Sigmoid colon (tissue), 7 donors: ENCODE measurements at regions of chr6 and their contacts with region 1.

Region 1: GRCh38 chr6:169751242-169752073 is at the starts of genes DYNLT2 and ERMARD:
- DNase-seq: peak; percentile 96
- H3K4me3 ChIP-seq: peak within 1 kb of the TSS; percentile 67 to 89 (median 82)
- H3K27ac ChIP-seq: peak within 1 kb of the TSS; percentile 96 to 97 (median 97)
- H3K4me1 ChIP-seq: peaks cover 0 to 26% (median 19%) of the 10 kb centered on the region in 4 donors
- H3K27me3 ChIP-seq: no peaks in the 10 kb centered on the region
- CTCF ChIP-seq: peak in 3 of 4 experiments; percentile 18 to 31 (median 20)
- EP300 ChIP-seq: peak in 2 of 4 donors; percentile 10 to 31
- POLR2A ChIP-seq: peak; percentile 83 to 88
- total RNA-seq, gene DYNLT2: 1.4 to 2.2 (median 2.1) TPM
- total RNA-seq, gene ERMARD: 14.8 to 32.4 (median 19.1) TPM

Region 2: DNA sequence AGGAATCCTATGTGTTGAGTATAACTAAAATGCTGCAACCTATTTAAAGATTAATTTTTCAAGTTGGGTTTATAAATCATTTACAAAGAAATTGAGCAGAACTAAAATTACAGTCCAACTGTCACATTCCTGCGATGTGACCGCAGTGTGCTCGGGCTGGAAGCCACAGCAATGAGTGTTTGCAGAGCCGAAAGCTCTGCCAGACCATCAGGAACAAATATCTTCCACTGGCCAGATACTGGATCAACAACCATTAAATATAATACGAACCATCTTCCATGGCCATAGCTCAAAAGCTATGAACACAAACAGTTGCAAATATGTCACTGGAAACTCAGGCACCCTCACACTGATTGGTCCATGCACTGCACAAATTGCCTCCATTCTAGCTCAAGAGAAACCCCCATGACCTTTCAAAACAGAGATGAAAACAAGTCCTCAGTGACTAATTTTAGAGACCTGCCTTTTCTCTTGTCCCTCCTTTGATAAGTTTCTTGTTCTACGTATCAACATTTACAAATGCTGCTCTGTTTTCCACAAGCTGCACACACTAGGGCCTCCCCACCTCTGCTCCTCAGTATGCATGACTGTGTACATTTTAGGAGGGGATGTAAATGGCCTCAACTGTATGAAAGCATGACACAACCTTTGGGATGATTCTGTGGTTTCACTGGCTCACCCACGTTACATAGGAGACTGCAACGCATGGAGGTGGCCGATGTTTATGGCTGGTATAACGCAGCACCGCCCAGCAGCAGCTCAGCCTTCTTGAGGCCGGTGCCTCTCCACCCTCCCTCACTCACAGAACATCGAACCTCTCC is 221.3 kb before region 1 on chr6:
- intact Hi-C with region 1: no loop called
- DNase-seq: peak; percentile 89
- H3K4me3 ChIP-seq: no peak overlapping the region
- H3K27ac ChIP-seq: peak overlapping the region; percentile 58 to 82 (median 78)
- H3K4me1 ChIP-seq: peaks cover 0 to 39% (median 28%) of the 10 kb centered on the region in 4 donors
- H3K27me3 ChIP-seq: no peaks in the 10 kb centered on the region
- CTCF ChIP-seq: no peak
- EP300 ChIP-seq: peak in 3 of 4 donors; percentile 78 to 92 (median 91)
- POLR2A ChIP-seq: no peak

Region 3: DNA sequence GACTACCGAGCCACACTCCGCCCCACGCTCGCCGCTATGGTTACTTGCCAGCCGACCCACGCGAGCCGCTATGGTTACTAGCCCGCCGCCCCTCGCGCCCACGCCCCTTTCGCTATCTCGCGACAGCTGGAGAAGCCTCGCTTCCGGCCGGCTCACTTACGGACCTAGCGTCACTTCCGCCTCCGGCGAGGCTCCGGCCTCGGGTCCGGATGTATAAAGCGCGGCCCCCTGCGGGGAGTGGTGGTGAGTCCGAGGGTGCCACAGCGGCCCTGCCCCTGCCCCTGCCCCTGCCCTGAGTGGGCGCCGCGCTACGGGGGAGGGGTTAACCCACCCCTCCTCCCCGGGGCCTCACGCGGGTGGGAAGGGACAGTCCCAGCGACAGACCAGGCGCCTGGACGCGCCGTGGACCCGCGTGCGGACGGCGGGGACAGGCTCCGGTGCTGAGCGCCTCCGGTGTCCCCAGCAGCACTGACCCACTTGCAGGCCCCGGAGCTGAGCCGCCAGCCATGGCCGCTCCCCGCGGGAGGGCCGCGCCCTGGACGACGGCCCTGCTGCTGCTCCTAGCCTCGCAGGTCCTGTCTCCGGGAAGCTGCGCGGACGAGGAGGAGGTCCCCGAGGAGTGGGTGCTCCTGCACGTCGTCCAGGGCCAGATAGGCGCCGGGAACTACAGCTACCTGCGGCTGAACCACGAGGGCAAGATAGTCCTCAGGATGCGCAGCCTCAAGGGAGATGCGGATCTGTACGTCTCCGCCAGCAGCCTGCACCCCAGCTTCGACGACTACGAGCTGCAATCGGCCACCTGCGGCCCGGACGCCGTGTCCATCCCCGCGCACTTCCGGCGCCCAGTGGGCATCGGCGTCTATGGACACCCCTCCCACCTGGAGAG is 49.3 kb before region 1 on chr6 and contains the starts of genes C6orf120 and WDR27:
- intact Hi-C with region 1: loop called (anchors 2 kb)
- DNase-seq: peak; percentile 98
- H3K4me3 ChIP-seq: peak within 1 kb of the TSS; percentile 83 to 96 (median 94)
- H3K27ac ChIP-seq: peak within 1 kb of the TSS; percentile 92 to 98 (median 98)
- H3K4me1 ChIP-seq: peaks cover 0 to 54% (median 47%) of the 10 kb centered on the region in 4 donors
- H3K27me3 ChIP-seq: no peaks in the 10 kb centered on the region
- CTCF ChIP-seq: no peak
- EP300 ChIP-seq: no peak
- POLR2A ChIP-seq: peak; percentile 94
- total RNA-seq, gene C6orf120: 22.7 to 33.6 (median 30.3) TPM
- total RNA-seq, gene WDR27: 20.0 to 46.0 (median 24.6) TPM

Region 4: GRCh38 chr6:169723200-169723909 is 28.1 kb before region 1 on chr6:
- intact Hi-C with region 1: loop called (anchors 1 kb)
- DNase-seq: peak; percentile 91
- H3K4me3 ChIP-seq: peak overlapping the region; percentile 50 to 89 (median 74)
- H3K27ac ChIP-seq: peak overlapping the region; percentile 87 to 98 (median 94)
- H3K4me1 ChIP-seq: peaks cover 0 to 37% (median 25%) of the 10 kb centered on the region in 4 donors
- H3K27me3 ChIP-seq: no peaks in the 10 kb centered on the region
- CTCF ChIP-seq: no peak
- EP300 ChIP-seq: no peak
- POLR2A ChIP-seq: no peak

Region 5: GRCh38 chr6:170554013-170554795 is 802.7 kb after region 1 on chr6 and contains the start of gene TBP:
- intact Hi-C with region 1: loop called (anchors 1 kb)
- DNase-seq: peak; percentile 99
- H3K4me3 ChIP-seq: peak within 1 kb of the TSS; percentile 71 to 92 (median 87)
- H3K27ac ChIP-seq: peak within 1 kb of the TSS; percentile 92 to 94 (median 93)
- H3K4me1 ChIP-seq: peaks cover 0 to 50% (median 46%) of the 10 kb centered on the region in 4 donors
- H3K27me3 ChIP-seq: no peaks in the 10 kb centered on the region
- CTCF ChIP-seq: no peak
- EP300 ChIP-seq: peak in 1 of 4 donors; percentile 60
- POLR2A ChIP-seq: peak in 1 of 2 donors; percentile 54
- total RNA-seq, gene TBP: 17.1 to 31.0 (median 20.4) TPM